CD8-positive, alpha-beta T cell (primary cell): ENCODE measurements at regions of chr22 and their contacts with region 1.

Region 1: DNA sequence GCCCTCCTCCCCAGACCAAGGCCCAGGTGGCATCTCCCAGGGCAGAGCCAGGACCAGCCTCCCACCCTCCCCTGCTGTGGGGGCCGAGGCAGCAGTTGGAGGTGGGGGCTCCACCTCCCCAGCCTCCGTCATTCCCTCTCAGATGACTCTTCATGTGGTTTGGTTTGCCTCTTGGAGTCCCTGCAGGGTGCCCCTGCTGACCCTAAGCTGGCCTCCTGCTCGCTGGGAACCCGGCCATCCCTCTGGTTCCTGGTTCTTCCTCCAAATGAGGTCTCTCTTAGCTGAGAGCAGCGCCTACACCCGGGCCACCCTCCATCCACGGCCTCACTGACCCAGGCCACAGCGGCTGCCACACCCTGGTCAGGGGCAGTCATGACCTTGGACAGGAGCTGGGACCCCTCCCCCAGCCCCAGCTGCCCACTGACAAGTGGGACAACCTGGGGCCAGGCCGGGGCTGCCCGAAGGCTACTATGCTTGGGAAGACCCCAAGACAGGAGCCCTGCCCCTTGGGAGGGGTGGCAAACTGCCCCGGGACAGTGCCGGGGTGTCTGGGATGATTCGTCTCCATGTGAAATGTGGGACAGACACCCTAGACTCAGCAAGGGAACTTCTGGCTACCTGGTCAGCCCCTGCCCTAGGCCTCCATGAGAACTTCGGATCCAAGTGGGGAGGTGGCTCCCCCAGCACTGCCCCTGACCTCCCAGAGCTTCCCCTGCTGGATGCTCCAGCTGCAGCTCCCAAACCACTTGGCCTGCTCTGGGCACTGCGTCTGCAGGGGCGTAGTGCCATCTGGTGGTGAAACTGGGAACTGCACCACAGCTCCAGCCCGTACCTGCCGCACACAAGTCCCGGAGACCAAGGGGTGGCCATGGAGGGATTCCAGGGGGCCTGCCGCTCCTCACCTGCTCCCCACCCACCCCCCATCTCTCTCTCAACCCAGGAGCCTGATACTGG is 194.5 kb downstream of the IGLL1 start:
- DNase-seq: peak; percentile 64 to 89 (median 82)
- ATAC-seq: peak; percentile 86
- H3K4me3 ChIP-seq: no peak overlapping the region
- H3K4me3 Mint-ChIP-seq: no peak overlapping the region
- H3K27ac ChIP-seq: no peak overlapping the region
- H3K27ac Mint-ChIP-seq: no peak overlapping the region
- H3K4me1 ChIP-seq: no peaks in the 10 kb centered on the region
- H3K4me1 Mint-ChIP-seq: peaks cover 2% of the 10 kb centered on the region
- H3K27me3 ChIP-seq: peaks cover 0 to 5% of the 10 kb centered on the region in 2 experiments
- H3K27me3 Mint-ChIP-seq: peaks cover 2% of the 10 kb centered on the region
- CTCF ChIP-seq: peak; percentile 95

Region 2: GRCh38 chr22:23128269-23129108 is 257.1 kb before region 1 on chr22:
- CTCF ChIA-PET with region 1: interaction called, 12 read pairs
- POLR2A ChIA-PET with region 1: no interaction called
- intact Hi-C with region 1: loop called in 1 of 2 experiments (anchors 1 kb)
- DNase-seq: peak; percentile 45 to 87 (median 78)
- ATAC-seq: peak; percentile 95
- H3K4me3 ChIP-seq: no peak overlapping the region
- H3K4me3 Mint-ChIP-seq: no peak overlapping the region
- H3K27ac ChIP-seq: no peak overlapping the region
- H3K27ac Mint-ChIP-seq: no peak overlapping the region
- H3K4me1 ChIP-seq: no peaks in the 10 kb centered on the region
- H3K4me1 Mint-ChIP-seq: peaks cover 3% of the 10 kb centered on the region
- H3K27me3 ChIP-seq: no peaks in the 10 kb centered on the region
- H3K27me3 Mint-ChIP-seq: no peaks in the 10 kb centered on the region
- CTCF ChIP-seq: peak; percentile 78

Region 3: GRCh38 chr22:23315341-23315917 is 70.1 kb before region 1 on chr22:
- CTCF ChIA-PET with region 1: interaction called, 12 read pairs
- POLR2A ChIA-PET with region 1: no interaction called
- intact Hi-C with region 1: loop called in 1 of 2 experiments (anchors 1 kb)
- DNase-seq: peak; percentile 8 to 74 (median 56)
- ATAC-seq: no peak
- H3K4me3 ChIP-seq: no peak overlapping the region
- H3K4me3 Mint-ChIP-seq: no peak overlapping the region
- H3K27ac ChIP-seq: no peak overlapping the region
- H3K27ac Mint-ChIP-seq: no peak overlapping the region
- H3K4me1 ChIP-seq: no peaks in the 10 kb centered on the region
- H3K4me1 Mint-ChIP-seq: peaks cover 7% of the 10 kb centered on the region
- H3K27me3 ChIP-seq: no peaks in the 10 kb centered on the region
- H3K27me3 Mint-ChIP-seq: no peaks in the 10 kb centered on the region
- CTCF ChIP-seq: peak; percentile 57